Activated T-helper 1 cell treated with anti-CD3 and anti-CD28 coated beads, Interleukin-12 subunit alpha, Interleukin-12 subunit beta, Interleukin-2, Interleukin-4 antibody, amounts not matched to agents 30 ng/mL and 10 ng/mL and 1 ng/mL, durations not matched to agents 14 hours and 24 hours and 36 hours (primary cell): ENCODE measurements at regions of chr2 and their contacts with region 1.

Region 1: DNA sequence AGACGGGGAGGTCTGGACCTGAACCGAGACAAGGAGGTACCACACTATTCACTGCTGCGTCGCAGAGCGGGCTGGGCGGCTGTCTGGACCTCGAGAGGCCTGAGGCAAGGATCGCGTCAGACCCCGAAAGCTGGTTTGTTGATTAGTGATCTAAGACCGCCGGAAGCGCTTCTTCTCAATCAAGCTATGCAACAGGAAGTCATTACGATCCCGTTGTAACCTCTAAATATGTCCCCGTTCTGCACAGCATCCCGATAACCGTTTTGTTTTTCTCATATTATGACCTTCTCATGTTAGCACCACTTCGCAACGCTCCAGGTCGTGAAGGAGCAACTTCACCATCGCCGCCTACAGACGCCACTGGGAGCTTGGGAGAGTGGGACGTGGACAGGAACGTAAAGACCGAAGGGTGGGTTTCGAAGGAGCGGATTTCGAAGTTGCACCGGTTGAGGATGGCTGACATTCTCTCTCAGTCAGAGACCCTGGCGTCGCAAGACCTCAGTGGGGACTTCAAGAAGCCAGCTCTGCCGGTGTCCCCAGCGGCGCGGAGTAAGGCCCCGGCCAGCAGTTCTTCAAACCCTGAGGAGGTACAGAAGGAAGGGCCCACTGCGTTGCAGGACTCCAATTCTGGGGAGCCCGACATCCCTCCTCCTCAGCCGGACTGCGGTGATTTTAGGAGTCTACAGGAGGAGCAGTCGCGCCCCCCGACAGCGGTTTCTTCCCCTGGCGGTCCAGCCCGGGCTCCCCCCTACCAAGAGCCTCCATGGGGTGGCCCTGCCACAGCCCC is at the starts of genes SLC4A1AP and SUPT7L:
- DNase-seq: peak; percentile 70
- H3K4me3 Mint-ChIP-seq: peak within 1 kb of the TSS; percentile 96
- H3K27ac Mint-ChIP-seq: peak within 1 kb of the TSS; percentile 97
- H3K4me1 Mint-ChIP-seq: peaks cover 55% of the 10 kb centered on the region
- H3K27me3 Mint-ChIP-seq: no peaks in the 10 kb centered on the region
- total RNA-seq, gene SLC4A1AP: 29.7 and 29.8 TPM in 2 replicates
- total RNA-seq, gene SUPT7L: 32.5 and 35.2 TPM in 2 replicates

Region 2: GRCh38 chr2:27471961-27472360 is 191.7 kb before region 1 on chr2:
- intact Hi-C with region 1: no loop called
- DNase-seq: no peak
- H3K4me3 Mint-ChIP-seq: no peak overlapping the region
- H3K27ac Mint-ChIP-seq: no peak overlapping the region
- H3K4me1 Mint-ChIP-seq: no peaks in the 10 kb centered on the region
- H3K27me3 Mint-ChIP-seq: no peaks in the 10 kb centered on the region

Region 3: GRCh38 chr2:27489498-27490397 is 173.9 kb before region 1 on chr2 and contains the start of gene IFT172:
- intact Hi-C with region 1: loop called (anchors 1 kb)
- DNase-seq: peak; percentile 98
- H3K4me3 Mint-ChIP-seq: peak within 1 kb of the TSS; percentile 91
- H3K27ac Mint-ChIP-seq: peak within 1 kb of the TSS; percentile 91
- H3K4me1 Mint-ChIP-seq: peaks cover 22% of the 10 kb centered on the region
- H3K27me3 Mint-ChIP-seq: peaks cover 13% of the 10 kb centered on the region
- total RNA-seq, gene IFT172: 13.4 and 13.5 TPM in 2 replicates

Region 4: GRCh38 chr2:27596627-27597026 is 67.0 kb before region 1 on chr2:
- intact Hi-C with region 1: no loop called
- DNase-seq: no peak
- H3K4me3 Mint-ChIP-seq: no peak overlapping the region
- H3K27ac Mint-ChIP-seq: no peak overlapping the region
- H3K4me1 Mint-ChIP-seq: peaks cover 38% of the 10 kb centered on the region
- H3K27me3 Mint-ChIP-seq: no peaks in the 10 kb centered on the region

Region 5: DNA sequence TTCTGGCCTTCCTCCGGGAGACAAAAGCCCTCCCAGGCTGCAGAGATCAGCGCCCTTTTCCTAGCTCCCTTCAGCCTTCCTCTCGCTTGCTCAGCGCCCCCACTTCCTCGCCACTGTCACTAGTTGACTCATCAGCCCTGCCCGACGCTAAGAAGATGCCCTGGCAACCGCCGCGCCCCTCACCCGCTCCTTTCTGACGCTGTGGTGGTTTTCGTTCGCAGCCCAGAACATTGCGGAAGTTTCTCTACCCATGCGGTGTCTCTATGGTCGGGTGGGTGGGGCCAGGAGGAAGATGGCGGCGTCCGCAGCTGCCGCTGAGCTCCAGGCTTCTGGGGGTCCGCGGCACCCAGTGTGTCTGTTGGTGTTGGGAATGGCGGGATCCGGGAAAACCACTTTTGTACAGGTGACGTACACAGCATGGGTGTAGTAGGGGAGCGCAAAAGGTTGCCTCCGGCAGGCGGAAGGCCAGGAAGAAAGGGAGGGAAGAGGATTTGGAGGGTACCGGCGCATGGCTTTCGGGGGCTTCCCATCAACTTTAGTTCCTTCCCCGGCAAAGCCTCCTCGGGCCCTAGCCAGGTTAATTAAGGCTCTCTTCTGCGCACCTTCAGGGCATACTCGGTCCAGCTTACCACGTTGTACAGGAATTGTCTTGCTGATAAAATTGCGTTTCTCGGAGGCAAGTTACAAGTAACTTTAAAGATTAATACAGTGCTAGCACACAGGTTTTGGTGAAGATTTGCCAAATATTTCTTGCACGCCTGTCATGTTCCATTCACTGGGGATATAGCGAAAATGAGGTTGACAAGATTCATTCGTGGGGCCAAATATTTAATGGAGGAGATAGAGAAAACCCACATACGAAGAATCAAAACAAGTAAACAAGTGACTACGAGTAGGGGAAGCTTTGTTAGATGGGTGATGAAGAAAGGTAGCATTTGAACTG is 34.6 kb before region 1 on chr2 and contains the starts of genes CCDC121 and GPN1:
- intact Hi-C with region 1: loop called (anchors 1 kb)
- DNase-seq: peak; percentile 93
- H3K4me3 Mint-ChIP-seq: no peak within 1 kb of the TSS
- H3K27ac Mint-ChIP-seq: peak within 1 kb of the TSS; percentile 73
- H3K4me1 Mint-ChIP-seq: peaks cover 20% of the 10 kb centered on the region
- H3K27me3 Mint-ChIP-seq: no peaks in the 10 kb centered on the region
- total RNA-seq, gene CCDC121: 0.66 and 1.3 TPM in 2 replicates
- total RNA-seq, gene GPN1: 48.3 and 51.0 TPM in 2 replicates

Region 6: GRCh38 chr2:27647289-27647688 is 16.4 kb before region 1 on chr2:
- intact Hi-C with region 1: no loop called
- DNase-seq: no peak
- H3K4me3 Mint-ChIP-seq: no peak overlapping the region
- H3K27ac Mint-ChIP-seq: no peak overlapping the region
- H3K4me1 Mint-ChIP-seq: no peaks in the 10 kb centered on the region
- H3K27me3 Mint-ChIP-seq: no peaks in the 10 kb centered on the region

Region 7: GRCh38 chr2:27683390-27684071 is 19.9 kb after region 1 on chr2:
- intact Hi-C with region 1: loop called (anchors 1 kb)
- DNase-seq: peak; percentile 80
- H3K4me3 Mint-ChIP-seq: no peak overlapping the region
- H3K27ac Mint-ChIP-seq: peak overlapping the region; percentile 74
- H3K4me1 Mint-ChIP-seq: peaks cover 32% of the 10 kb centered on the region
- H3K27me3 Mint-ChIP-seq: no peaks in the 10 kb centered on the region

Region 8: GRCh38 chr2:27765621-27766269 is 102.1 kb after region 1 on chr2:
- intact Hi-C with region 1: no loop called
- DNase-seq: peak; percentile 31
- H3K4me3 Mint-ChIP-seq: no peak overlapping the region
- H3K27ac Mint-ChIP-seq: no peak overlapping the region
- H3K4me1 Mint-ChIP-seq: peaks cover 12% of the 10 kb centered on the region
- H3K27me3 Mint-ChIP-seq: peaks cover 6% of the 10 kb centered on the region